Head of caudate nucleus (tissue), 42 donors: ENCODE measurements at regions of chr15 and their contacts with region 1.

Region 1: DNA sequence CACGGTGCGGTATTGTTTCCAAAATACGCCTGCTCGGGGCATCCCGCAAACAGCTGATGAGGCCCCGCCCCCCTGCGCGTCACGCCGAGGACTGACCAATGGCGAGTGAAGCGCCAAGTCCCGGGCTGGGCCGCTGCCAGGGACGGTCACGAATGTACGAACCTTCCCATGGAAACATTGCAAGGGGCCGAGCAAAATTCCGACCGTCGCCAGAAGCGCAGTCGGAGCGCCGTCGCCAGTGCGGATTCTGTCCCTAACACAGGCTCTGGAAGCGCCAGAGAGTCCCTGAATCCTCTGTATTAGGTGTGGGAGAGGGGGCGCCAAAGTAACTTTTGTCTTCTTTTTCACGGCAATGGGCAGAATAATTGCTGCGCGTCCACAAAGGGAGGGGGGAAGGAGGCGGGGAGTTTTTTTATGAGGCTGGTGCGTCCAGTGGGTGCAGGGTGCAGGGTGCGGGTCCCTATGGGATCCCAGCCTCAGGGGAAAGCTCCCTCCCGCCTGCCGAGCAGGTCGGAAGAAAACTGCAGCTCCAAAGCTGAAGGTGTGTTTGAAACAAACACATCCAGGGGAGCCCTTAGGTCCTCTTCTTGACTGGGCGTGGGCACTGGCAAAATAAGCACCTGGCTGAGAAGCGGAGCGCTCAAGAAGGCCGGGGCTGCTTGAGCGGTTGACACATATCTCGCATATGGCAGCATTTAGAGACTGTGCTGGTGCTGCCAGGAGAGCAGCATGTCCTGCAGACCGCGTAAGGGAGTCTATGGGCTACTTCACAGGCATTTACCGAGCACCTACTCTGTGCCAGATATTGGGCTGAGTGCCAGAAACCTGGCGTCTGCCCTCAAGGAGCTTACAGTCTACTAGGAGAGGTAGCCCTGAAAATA is at the start of gene BMF:
- DNase-seq: peak; percentile 96 to 99 (median 98)

Region 2: DNA sequence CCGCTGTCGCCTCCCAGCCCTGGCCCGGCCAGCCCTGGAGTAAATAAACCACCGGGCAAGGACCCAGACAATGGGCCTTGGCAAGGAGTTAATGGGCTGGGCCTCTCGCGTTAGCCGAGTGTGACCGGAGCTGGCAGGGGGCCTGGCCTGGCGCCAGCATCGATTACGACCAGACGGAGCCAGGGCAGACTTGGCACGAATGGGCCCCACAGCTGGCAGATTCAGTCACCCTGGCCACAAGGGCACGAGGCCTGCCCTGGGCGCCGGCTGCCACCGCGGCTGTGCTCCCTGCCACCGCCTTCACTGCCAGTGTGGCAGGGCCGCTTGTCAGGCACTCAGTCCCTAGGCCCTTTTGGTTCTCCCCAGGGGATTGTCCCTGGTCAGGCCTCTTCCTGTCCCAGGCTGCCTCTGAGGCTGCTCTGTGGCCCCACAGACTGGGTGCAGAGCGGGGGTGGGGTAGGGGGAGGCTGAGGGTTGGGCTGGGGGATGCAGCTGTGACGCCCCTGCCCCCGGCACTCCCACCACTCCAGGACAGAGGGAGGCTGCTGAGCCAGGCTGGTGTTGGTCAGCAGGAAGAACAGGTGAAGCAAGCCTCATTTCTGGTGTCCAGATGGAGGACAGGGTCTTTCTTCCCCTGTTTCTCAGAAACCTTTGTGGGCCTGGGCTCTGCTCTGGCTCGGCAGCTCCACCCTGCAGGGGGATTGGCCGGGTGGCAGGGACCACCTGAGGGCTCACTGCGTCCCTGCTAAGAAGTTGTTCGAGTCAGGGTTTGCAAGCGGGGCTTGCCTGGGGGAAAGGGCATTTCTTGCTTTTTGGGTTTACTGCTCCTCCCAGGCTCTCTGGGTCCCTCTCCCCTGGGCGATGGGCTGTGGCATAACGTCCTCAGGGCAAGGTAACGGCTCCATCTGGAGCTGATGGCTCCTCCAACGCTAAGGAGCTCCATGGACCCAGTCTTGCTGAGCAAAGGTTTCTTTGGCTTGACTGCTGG is 39.6 kb before region 1 on chr15:
- intact Hi-C with region 1: loop called (anchors 5 kb)
- DNase-seq: peak; percentile 90 to 99 (median 97)

Region 3: DNA sequence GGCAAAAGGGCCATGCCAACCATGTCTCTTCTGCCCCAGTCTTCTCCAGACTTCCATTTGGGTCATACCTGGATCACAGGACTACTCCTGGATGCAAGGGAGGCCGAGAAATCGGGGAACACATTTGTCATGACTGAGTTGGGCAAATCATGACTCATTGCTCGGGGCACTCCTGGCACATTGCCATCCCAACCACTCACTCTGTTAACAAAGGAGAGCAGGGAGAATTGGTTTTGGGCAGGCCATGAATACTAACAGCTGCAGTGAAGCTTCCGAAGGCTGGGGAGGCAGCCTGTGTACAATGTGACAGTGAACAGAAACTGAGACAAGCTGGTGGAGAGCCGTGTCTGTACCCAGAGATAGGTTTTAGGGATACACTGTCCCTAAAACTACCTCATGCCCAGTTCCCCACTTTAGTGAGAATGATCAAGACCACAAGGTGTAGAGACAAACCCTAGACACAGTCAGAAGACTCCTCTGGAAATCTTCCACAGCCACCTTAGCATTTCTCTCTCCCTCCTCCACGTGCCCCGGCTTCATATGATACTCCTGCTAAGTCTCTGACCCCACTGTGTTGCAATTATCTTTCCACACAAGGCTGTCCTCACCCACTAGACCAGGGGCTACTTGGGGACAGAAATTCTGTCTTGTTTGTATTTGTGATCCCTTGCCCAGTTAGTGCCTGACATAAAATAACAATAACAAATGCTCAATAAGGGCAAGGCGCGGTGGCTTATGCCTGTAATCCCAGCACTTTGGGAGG is 41.2 kb after region 1 on chr15:
- intact Hi-C with region 1: no loop called
- DNase-seq: peak in 15 of 42 donors; percentile 2 to 58 (median 22)

Region 4: GRCh38 chr15:40160689-40161688 is 51.9 kb after region 1 on chr15 and contains the start of gene BUB1B:
- intact Hi-C with region 1: loop called (anchors 5 kb)
- DNase-seq: peak; percentile 87 to 97 (median 93)

Region 5: DNA sequence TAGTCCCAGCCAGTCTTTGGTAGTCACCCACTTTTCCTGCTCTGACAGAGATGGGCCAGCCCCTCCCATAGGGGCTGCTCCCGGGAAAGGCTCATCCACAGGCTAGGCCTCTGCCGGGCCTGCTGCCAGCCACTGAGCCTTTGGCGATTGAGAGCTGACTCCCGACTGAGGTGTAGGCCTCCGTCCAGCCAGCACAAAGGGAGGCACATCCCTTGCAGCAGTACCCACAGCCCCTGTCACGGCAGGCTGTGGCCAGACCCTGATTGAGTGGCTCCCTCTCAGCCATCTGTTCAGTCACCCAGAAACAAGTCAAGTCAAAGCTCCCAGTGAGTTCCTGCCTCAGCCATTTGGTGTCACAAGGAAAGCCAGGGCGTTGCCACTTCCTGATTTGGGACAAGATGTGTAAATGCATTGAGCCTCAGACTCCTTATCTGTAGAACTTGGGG is 123.6 kb after region 1 on chr15:
- intact Hi-C with region 1: no loop called
- DNase-seq: peak in 2 of 42 donors; percentile 38